WTC11 (cell line): ENCODE measurements at regions of chr1 and their contacts with region 1.

Region 1: DNA sequence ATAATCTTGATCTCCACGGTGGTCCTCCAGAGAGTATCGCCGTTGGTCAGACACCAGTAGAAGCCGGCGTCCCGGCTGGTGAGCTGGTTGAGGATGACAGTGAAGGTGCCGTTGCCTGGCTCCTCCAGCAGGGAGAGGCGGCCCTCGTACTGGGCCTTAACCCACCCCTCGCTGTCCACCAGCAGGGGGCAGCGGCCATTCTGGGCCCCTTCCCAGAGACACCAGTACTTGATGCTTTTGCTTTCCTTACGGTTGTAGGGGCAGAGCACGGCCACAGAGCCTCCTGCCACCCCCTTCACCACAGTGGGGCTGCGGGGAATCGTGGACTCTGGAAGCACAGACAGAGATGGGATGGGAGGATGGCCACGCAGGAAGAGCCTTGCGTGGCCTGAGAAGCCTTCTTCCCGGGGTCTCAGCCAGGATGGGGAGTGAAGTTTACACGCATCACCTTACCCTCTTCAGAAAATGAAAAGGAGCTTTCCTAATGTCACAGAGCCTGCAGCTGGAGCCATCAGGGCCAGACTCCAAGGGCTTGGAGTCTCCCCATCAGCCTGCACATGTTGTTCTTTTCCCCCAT is 10.7 kb downstream of the PIGR start:
- DNase-seq: peak; percentile 83
- ATAC-seq: peak; percentile 92
- H3K4me3 Mint-ChIP-seq: no peak overlapping the region
- H3K27ac Mint-ChIP-seq: no peak overlapping the region
- H3K4me1 Mint-ChIP-seq: peaks cover 5% of the 10 kb centered on the region; the same call in 1 of the 2 replicates
- H3K27me3 Mint-ChIP-seq: no peaks in the 10 kb centered on the region
- CTCF ChIP-seq: peak; percentile 59

Region 2: GRCh38 chr1:206925106-206925736 is 10.4 kb before region 1 on chr1:
- CTCF ChIA-PET with region 1: interaction called, 17 read pairs
- POLR2A ChIA-PET with region 1: no interaction called
- DNase-seq: peak; percentile 25
- ATAC-seq: peak; percentile 85
- H3K4me3 Mint-ChIP-seq: no peak overlapping the region
- H3K27ac Mint-ChIP-seq: no peak overlapping the region
- H3K4me1 Mint-ChIP-seq: no peaks in the 10 kb centered on the region
- H3K27me3 Mint-ChIP-seq: no peaks in the 10 kb centered on the region; the same call in 1 of the 2 replicates
- CTCF ChIP-seq: no peak

Region 3: GRCh38 chr1:206955476-206956451 is 20.2 kb after region 1 on chr1:
- CTCF ChIA-PET with region 1: interaction called, 14 read pairs
- POLR2A ChIA-PET with region 1: no interaction called
- DNase-seq: no peak
- ATAC-seq: peak; percentile 38; the same call in 1 of the 2 replicates
- H3K4me3 Mint-ChIP-seq: no peak overlapping the region
- H3K27ac Mint-ChIP-seq: no peak overlapping the region
- H3K4me1 Mint-ChIP-seq: no peaks in the 10 kb centered on the region
- H3K27me3 Mint-ChIP-seq: peaks cover 4% of the 10 kb centered on the region
- CTCF ChIP-seq: no peak

Region 4: DNA sequence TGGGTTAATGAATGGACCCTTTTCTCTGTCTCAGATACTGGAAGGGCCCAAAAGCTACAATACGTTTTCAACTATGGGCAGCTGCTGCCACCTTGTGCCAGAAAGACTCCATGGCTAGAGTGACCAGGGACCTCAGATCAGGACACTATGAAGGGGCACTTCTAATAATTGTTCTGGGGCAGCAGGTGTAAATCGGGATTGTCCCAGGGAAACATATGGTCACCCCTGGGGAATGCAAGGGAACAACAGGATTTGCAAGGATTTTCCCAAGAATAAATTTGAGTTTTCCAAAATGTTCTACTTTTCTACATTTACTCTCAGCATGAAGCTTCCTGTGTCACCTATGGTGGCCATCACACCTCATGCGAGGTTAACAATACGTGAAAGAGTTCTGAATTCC is 46.6 kb after region 1 on chr1:
- CTCF ChIA-PET with region 1: interaction called, 87 read pairs
- POLR2A ChIA-PET with region 1: no interaction called
- DNase-seq: peak; percentile 59
- ATAC-seq: peak; percentile 71
- H3K4me3 Mint-ChIP-seq: no peak overlapping the region
- H3K27ac Mint-ChIP-seq: no peak overlapping the region
- H3K4me1 Mint-ChIP-seq: peaks cover 39% of the 10 kb centered on the region
- H3K27me3 Mint-ChIP-seq: peaks cover 43% of the 10 kb centered on the region
- CTCF ChIP-seq: peak; percentile 21; the same call in 1 of the 2 replicates

Region 5: DNA sequence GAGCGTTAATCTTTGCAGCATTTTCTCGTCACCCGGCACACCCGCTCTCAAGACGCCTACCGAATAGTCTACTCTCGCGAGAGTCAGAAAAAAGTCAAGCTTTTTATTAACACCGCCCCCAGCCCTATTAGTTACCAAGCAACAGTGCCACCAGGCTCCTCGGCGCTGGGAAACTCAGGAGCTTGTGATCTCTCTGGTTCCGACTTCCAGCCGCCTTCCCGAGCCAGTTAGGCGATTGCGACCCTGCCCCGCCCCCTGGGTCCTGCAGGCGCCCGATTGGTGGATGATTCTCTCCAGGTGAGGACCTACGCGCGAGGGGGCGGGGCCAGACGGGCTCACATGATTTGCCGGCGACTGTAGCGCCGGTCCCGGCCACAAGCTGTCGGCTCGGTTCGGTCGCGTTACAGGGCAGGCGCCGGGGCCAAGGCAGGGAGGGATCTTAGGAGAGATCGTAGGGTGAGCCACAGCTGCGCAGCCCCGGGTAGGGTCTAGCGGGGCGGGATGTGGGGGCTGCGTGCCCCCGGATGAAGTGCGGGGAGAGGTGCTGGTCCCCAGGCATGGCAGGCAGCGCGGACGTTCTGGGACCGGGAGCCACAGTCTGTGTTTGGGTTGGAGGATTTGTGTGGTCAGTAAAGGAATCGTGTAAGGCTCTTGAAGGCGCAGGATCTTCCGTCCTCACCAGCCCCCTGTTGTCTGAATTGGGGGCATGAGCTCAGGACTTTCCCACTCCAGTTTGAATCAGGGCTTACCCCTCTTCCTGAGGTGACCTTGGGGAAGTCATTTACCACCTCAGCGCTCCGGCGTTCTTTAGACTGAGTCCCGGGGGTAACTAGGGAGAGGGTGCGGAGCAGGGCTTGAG is 117.6 kb after region 1 on chr1 and contains the start of gene PFKFB2:
- CTCF ChIA-PET with region 1: interaction called, 12 read pairs
- POLR2A ChIA-PET with region 1: no interaction called
- DNase-seq: peak; percentile 100
- ATAC-seq: peak; percentile 93
- H3K4me3 Mint-ChIP-seq: peak within 1 kb of the TSS; percentile 95
- H3K27ac Mint-ChIP-seq: peak within 1 kb of the TSS; percentile 98
- H3K4me1 Mint-ChIP-seq: peaks cover 34% of the 10 kb centered on the region
- H3K27me3 Mint-ChIP-seq: no peaks in the 10 kb centered on the region
- CTCF ChIP-seq: no peak
- total RNA-seq, gene PFKFB2: 16.8 to 21.0 TPM (median 20.9 TPM) in 3 replicates

Region 6: DNA sequence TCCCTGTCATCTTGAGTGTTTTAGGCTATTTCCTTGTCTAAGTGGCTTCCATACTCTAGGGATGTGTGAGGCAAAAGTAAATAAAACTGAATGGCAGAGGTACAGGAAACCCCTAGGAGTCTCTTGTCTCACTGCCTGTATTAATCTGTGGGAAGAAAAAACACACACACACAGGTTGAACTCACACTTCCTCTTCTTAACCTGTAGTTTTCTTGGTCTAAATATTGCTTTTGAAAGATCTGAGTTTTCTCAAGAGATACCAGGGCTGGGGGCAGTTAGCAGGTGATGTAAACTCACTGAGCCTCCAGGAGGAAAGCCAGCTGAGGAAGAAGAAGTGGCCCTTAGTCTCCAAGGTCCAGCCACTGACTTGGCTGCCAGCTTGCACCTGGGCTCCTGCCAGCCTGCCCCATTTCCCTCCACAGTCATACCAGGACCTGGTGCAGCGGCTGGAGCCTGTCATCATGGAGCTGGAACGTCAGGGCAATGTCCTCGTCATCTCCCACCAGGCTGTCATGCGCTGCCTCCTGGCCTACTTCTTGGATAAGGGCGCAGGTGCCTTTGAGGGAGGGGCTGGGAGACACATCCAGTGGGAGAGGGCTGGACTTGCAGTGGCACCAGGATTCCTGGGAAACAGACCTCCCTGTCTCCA is 134.4 kb after region 1 on chr1:
- CTCF ChIA-PET with region 1: no interaction called
- POLR2A ChIA-PET with region 1: no interaction called
- DNase-seq: no peak
- ATAC-seq: no peak
- H3K4me3 Mint-ChIP-seq: no peak overlapping the region
- H3K27ac Mint-ChIP-seq: no peak overlapping the region
- H3K4me1 Mint-ChIP-seq: no peaks in the 10 kb centered on the region
- H3K27me3 Mint-ChIP-seq: no peaks in the 10 kb centered on the region
- CTCF ChIP-seq: no peak

Region 7: GRCh38 chr1:207194197-207194596 is 258.6 kb after region 1 on chr1:
- CTCF ChIA-PET with region 1: no interaction called
- POLR2A ChIA-PET with region 1: no interaction called
- DNase-seq: no peak
- ATAC-seq: no peak
- H3K4me3 Mint-ChIP-seq: no peak overlapping the region
- H3K27ac Mint-ChIP-seq: no peak overlapping the region
- H3K4me1 Mint-ChIP-seq: no peaks in the 10 kb centered on the region
- H3K27me3 Mint-ChIP-seq: peaks cover 3% of the 10 kb centered on the region; the same call in 1 of the 2 replicates
- CTCF ChIP-seq: no peak